ENCODE measurements at regions of chr12 and their contacts with region 1.

Region 1: DNA sequence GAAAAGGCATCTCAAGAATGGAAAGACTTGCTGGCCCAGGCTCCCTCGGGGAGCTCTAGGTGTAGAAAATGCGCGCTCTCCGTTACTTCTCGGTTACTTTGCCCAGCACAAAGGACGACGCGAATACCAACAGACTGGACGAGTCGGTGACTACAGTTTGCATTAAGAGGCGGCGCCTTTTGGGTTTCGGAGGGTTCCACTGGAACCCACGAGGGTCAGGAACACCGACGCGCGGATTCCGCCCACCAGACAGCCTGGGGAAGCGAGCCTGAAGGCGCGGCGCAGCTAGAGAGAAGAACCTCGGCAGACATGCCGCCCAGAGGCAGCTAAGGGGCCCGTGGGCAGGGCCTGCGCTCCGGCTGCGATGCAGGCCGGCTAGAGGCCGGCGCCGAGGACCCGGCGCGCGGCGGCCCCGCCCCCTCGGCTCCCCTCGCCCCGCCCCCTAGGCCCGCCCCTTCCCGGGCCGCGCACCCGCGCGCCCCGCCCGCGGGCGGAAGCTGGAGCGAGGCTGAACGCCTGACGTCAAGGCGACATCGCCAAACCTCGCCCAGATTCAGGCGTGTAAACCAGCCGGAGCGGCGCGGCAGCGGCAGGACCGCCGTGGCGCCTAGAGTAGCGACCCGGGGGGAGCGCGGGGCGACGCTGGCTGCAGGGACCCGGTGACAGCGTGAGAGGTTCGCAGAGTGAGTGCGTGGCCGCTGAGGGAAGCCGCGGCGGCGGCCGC is at the start of gene RAP1B:
- DNase-seq: peak; percentile 94
- ATAC-seq: peak; percentile 76
- H3K4me3 Mint-ChIP-seq: peak within 1 kb of the TSS; percentile 86
- H3K27ac Mint-ChIP-seq: peak within 1 kb of the TSS; percentile 94
- H3K4me1 Mint-ChIP-seq: peaks cover 39% of the 10 kb centered on the region
- H3K27me3 Mint-ChIP-seq: no peaks in the 10 kb centered on the region
- total RNA-seq, gene RAP1B: 174 to 242 TPM

Region 2: DNA sequence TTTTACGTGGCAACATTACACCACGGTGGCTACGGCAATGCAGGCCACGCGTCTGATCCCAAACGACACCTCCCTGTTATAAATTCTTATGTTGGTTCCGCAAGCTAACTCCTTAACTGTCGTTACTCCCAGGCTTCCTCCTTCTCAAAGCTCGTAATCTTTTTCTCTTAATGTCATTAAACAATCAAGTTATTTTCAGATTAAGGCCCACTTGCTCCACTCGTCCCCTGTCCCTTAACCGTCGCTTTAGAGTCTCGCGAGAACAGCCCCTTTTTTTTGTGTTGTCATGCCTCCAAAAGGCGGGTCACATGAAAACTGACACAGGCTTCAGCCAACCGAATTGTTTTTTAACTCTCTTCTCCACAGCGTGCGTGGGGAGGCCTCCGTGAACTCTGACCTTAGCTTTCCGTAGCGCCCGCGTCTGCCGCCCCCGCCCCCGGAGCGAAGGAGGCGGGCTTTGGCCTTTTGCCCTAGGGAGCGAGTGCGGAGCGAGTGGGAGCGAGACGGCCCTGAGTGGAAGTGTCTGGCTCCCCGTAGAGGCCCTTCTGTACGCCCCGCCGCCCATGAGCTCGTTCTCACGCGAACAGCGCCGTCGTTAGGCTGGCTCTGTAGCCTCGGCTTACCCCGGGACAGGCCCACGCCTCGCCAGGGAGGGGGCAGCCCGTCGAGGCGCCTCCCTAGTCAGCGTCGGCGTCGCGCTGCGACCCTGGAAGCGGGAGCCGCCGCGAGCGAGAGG is 1341.5 kb before region 1 on chr12 and contains the start of gene CAND1:
- CTCF ChIA-PET with region 1: no interaction called
- POLR2A ChIA-PET with region 1: no interaction called
- intact Hi-C with region 1: loop called in 1 of 2 experiments (anchors 5 kb)
- DNase-seq: peak; percentile 97
- ATAC-seq: peak; percentile 82
- H3K4me3 Mint-ChIP-seq: peak within 1 kb of the TSS; percentile 98
- H3K27ac Mint-ChIP-seq: peak within 1 kb of the TSS; percentile 100
- H3K4me1 Mint-ChIP-seq: peaks cover 31% of the 10 kb centered on the region
- H3K27me3 Mint-ChIP-seq: no peaks in the 10 kb centered on the region
- total RNA-seq, gene CAND1: 158 to 224 TPM

Region 3: DNA sequence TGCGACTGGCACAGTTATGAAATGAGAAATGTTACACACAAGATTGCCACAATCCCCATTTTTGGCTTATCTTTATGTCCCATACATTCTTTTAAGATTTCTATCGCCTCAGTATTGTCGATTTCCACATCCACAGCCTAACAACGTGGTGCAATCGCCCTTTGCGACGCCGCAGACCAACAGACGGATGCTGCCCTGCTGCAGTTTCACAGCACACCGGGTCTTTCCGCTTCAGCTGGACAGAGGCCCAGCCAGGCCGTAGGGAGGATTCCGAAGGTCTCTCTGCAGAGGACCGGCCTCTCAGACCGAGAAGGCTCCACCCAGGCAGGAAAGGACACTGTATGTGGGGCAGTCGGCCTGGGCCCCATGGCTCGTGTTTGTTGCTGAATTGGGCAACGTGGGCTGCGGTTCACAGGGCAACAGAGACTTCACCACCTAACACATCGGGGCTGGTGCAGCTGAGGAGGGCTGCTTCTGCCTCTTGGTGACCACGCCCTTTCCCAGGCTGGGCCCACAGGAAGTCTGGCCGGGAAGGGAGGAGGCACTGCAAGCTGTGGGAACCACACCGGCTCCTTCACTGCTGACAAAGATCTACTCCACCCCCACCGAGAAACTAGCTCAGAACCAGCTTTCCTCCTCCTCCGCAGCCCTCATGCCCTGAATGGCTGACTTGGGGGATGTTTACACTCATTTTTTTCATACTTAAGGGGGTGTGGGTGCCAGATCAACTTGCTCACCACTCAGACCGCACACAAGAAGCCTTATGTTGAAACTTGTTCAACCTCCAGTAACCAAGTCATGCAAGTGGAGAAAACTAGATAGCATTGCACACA is 245.4 kb before region 1 on chr12:
- CTCF ChIA-PET with region 1: interaction called, 3 read pairs
- POLR2A ChIA-PET with region 1: no interaction called
- intact Hi-C with region 1: loop called (anchors 1 to 2 kb)
- DNase-seq: peak; percentile 91
- ATAC-seq: peak; percentile 92
- H3K4me3 Mint-ChIP-seq: peak overlapping the region; percentile 74
- H3K27ac Mint-ChIP-seq: peak overlapping the region; percentile 96
- H3K4me1 Mint-ChIP-seq: peaks cover 64% of the 10 kb centered on the region
- H3K27me3 Mint-ChIP-seq: no peaks in the 10 kb centered on the region

Region 4: GRCh38 chr12:68458866-68459265 is 151.7 kb before region 1 on chr12:
- CTCF ChIA-PET with region 1: no interaction called
- POLR2A ChIA-PET with region 1: no interaction called
- intact Hi-C with region 1: no loop called
- DNase-seq: no peak
- ATAC-seq: no peak
- H3K4me3 Mint-ChIP-seq: no peak overlapping the region
- H3K27ac Mint-ChIP-seq: no peak overlapping the region
- H3K4me1 Mint-ChIP-seq: peaks cover 32% of the 10 kb centered on the region
- H3K27me3 Mint-ChIP-seq: no peaks in the 10 kb centered on the region

Region 5: GRCh38 chr12:68482660-68483059 is 127.9 kb before region 1 on chr12:
- CTCF ChIA-PET with region 1: interaction called, 3 read pairs
- POLR2A ChIA-PET with region 1: no interaction called
- intact Hi-C with region 1: loop called (anchors 2 to 5 kb)
- DNase-seq: peak; percentile 26
- ATAC-seq: peak; percentile 8
- H3K4me3 Mint-ChIP-seq: no peak overlapping the region
- H3K27ac Mint-ChIP-seq: peak overlapping the region; percentile 66
- H3K4me1 Mint-ChIP-seq: peaks cover 40% of the 10 kb centered on the region
- H3K27me3 Mint-ChIP-seq: no peaks in the 10 kb centered on the region

Region 6: DNA sequence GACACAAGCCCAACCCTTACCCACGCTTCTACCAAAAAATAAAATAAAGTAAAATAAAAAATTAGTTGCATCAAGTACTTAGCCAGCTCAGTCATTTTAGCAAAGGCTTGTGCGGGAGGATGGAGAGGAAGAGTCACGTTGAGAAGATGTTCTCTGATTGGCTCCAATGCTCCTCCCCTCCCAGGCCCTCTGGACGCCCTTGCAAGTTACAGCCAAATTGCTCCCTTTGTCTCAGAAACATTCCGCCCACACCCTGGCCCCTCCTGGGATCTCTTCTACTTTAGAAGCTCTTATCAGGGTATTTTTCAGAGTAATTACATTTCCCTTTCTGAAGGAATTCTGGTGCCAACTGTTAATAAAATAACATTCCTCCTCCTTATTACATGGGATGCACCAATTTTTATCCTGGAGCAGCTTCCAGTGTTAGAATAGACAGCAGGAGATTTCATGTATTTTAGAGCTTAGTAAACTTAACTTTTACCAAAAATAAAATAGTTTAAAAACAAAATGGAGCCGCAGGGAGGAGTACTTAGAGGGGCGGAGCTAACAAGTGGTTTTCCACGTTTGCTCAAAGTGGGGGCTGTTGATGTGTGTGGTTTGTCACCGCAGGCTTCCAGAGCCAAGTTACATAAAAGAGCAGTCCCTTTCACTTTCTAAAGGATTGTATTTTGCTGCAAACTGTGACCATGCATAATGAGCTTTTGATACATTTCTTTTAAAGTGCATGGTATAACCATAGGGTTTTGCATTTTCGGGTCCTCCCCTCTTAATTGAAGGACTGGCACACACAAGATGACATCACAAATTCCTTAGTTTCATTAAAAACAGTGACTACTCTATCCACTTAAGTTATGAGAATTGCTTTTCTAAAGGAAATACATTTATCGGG is 71.6 kb before region 1 on chr12:
- CTCF ChIA-PET with region 1: interaction called, 5 read pairs
- POLR2A ChIA-PET with region 1: no interaction called
- intact Hi-C with region 1: loop called in 1 of 2 experiments (anchors 1 kb)
- DNase-seq: peak; percentile 74
- ATAC-seq: peak; percentile 84
- H3K4me3 Mint-ChIP-seq: peak overlapping the region; percentile 33
- H3K27ac Mint-ChIP-seq: peak overlapping the region; percentile 67
- H3K4me1 Mint-ChIP-seq: peaks cover 45% of the 10 kb centered on the region
- H3K27me3 Mint-ChIP-seq: no peaks in the 10 kb centered on the region

Region 7: GRCh38 chr12:68648179-68648578 is 37.6 kb after region 1 on chr12:
- CTCF ChIA-PET with region 1: no interaction called
- POLR2A ChIA-PET with region 1: interaction called, 3 read pairs
- intact Hi-C with region 1: loop called in 1 of 2 experiments (anchors 5 kb)
- DNase-seq: no peak
- ATAC-seq: peak; percentile 94
- H3K4me3 Mint-ChIP-seq: no peak overlapping the region
- H3K27ac Mint-ChIP-seq: peak overlapping the region; percentile 42
- H3K4me1 Mint-ChIP-seq: peaks cover 46% of the 10 kb centered on the region
- H3K27me3 Mint-ChIP-seq: no peaks in the 10 kb centered on the region

Region 8: DNA sequence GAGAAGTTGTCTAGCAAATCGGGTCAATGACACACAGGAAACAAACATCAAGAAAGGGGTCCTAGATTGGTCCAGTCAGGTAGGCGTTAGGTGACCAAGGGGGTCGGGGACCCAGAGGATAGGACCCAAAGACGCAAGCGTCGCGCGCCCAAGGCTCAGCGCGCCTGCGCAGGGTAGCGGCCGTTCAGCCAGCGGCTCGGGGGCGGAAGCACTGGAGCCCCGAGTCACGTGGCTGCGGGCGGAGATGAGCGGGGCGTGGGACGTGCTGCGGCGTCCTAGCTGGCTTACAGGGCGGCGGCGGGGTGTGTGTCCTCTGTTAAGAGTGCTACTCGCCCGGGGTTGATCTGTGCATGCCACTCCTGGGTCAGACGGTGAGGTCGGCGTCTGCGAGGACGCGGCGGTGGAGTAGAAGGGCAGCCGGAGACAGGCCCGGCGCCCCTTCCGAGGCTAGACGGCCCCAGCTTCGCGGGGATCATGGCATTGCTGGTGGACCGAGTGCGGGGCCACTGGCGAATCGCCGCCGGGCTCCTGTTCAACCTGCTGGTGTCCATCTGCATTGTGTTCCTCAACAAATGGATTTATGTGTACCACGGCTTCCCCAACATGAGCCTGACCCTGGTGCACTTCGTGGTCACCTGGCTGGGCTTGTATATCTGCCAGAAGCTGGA is 135.5 kb after region 1 on chr12 and contains the start of gene SLC35E3:
- CTCF ChIA-PET with region 1: no interaction called
- POLR2A ChIA-PET with region 1: no interaction called
- intact Hi-C with region 1: loop called in 1 of 2 experiments (anchors 2 kb)
- DNase-seq: peak; percentile 96
- ATAC-seq: peak; percentile 97
- H3K4me3 Mint-ChIP-seq: peak within 1 kb of the TSS; percentile 87
- H3K27ac Mint-ChIP-seq: peak within 1 kb of the TSS; percentile 92
- H3K4me1 Mint-ChIP-seq: peaks cover 16% of the 10 kb centered on the region
- H3K27me3 Mint-ChIP-seq: no peaks in the 10 kb centered on the region
- total RNA-seq, gene SLC35E3: 3.5 to 5.1 TPM

Region 9: DNA sequence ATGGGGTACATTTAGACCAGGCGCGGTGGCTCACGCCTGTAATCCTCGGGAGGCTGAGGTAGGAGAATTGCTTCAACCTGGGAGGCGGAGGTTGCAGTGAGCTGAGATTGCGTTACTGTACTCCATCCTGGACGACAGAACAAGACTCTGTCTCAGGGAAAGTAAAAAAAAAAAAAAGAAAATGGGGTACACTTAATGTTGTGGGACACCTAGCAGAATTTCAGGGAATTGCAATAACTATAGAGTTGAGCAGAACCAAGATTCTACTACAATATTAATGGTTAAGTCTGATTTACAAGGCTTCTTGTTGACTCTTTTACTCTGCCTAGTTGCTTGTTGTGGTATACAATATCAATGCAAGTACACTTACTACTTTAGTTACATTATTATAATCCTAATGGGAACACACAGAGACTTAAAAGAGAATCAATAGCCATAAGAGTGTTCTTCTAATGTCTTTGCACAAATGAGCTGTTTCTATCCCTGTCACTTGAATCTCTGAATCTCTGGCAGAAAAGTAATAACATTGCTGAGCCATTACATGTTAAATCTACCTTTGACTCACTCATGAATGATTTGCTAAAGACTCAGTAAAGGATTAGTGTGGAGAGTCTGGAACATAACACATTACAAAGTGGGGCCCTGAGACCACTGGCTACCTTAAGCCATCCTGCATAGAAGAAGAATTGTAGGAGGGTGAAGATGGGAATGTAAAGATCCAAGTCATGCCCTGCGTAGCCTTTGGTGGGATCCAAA is 1065.9 kb after region 1 on chr12:
- CTCF ChIA-PET with region 1: no interaction called
- POLR2A ChIA-PET with region 1: no interaction called
- intact Hi-C with region 1: no loop called
- DNase-seq: no peak
- ATAC-seq: no peak
- H3K4me3 Mint-ChIP-seq: no peak overlapping the region
- H3K27ac Mint-ChIP-seq: no peak overlapping the region
- H3K4me1 Mint-ChIP-seq: no peaks in the 10 kb centered on the region
- H3K27me3 Mint-ChIP-seq: peaks cover 2% of the 10 kb centered on the region